ENCODE measurements at regions of chr4 and their contacts with region 1.

Region 1: DNA sequence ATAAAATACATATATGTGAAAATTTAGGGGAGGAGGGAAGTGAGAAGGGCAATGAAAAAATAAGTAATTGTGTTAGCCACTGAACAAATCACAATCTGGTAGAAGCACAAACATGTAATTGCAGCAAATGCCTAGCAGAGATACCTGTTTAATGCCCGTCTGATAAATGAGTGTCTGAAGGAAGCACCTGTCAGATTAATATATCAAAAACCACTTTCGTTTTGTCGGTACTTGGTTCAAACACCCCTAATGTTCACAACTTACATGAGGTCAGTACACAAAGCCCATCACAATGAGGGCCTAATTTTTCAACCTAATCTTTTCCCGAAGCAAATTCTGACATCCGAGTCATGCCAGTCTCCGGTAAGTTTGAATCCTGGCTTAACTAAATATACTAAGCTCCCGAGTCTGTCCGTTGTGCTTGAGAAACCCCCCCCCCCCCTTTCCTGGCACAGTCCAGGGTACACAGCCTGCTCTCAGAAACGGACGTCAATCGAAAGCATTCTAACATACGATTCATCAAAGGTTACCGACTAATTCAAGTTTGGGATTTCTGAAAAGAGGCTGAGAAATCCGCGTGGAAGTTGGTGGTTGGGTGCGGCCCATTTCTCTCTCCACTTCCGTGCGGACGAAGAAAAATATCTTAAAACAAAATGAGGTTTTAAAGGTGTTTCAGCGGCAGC is 758 bp downstream of the SDAD1 start:
- DNase-seq: peak in 2 of 9 experiments; percentile 8 to 32
- ATAC-seq: no peak
- H3K4me3 ChIP-seq: peak overlapping the region; percentile 78 to 91
- H3K4me3 Mint-ChIP-seq: peak overlapping the region; percentile 96
- H3K27ac ChIP-seq: peak overlapping the region; percentile 17 to 73
- H3K27ac Mint-ChIP-seq: peak overlapping the region; percentile 95
- H3K4me1 ChIP-seq: peaks cover 37% of the 10 kb centered on the region
- H3K4me1 Mint-ChIP-seq: peaks cover 29% of the 10 kb centered on the region
- H3K27me3 ChIP-seq: no peaks in the 10 kb centered on the region
- H3K27me3 Mint-ChIP-seq: peaks cover 1% of the 10 kb centered on the region
- CTCF ChIP-seq: no peak

Region 2: GRCh38 chr4:75514131-75514948 is 475.6 kb before region 1 on chr4 and contains the starts of genes RCHY1 and THAP6:
- CTCF ChIA-PET with region 1: no interaction called
- POLR2A ChIA-PET with region 1: no interaction called
- intact Hi-C with region 1: loop called (anchors 2 to 5 kb)
- DNase-seq: peak; percentile 84 to 97 (median 92)
- ATAC-seq: peak; percentile 87
- H3K4me3 ChIP-seq: peak within 1 kb of the TSS; percentile 92 to 94
- H3K4me3 Mint-ChIP-seq: no peak within 1 kb of the TSS
- H3K27ac ChIP-seq: peak within 1 kb of the TSS; percentile 96 to 98
- H3K27ac Mint-ChIP-seq: peak within 1 kb of the TSS; percentile 99
- H3K4me1 ChIP-seq: peaks cover 55% of the 10 kb centered on the region
- H3K4me1 Mint-ChIP-seq: peaks cover 63% of the 10 kb centered on the region
- H3K27me3 ChIP-seq: no peaks in the 10 kb centered on the region
- H3K27me3 Mint-ChIP-seq: no peaks in the 10 kb centered on the region
- CTCF ChIP-seq: no peak
- total RNA-seq, gene RCHY1: 45.4 to 52.8 TPM
- total RNA-seq, gene THAP6: 15.3 to 16.3 TPM